CD4-positive, alpha-beta T cell (primary cell): ENCODE measurements at regions of chr12 and their contacts with region 1.

Region 1: GRCh38 chr12:104201238-104202001 is 14.2 kb upstream of the TXNRD1 start:
- DNase-seq: peak; percentile 16 to 82 (median 34)
- ATAC-seq: peak; percentile 82
- H3K4me3 ChIP-seq: no peak overlapping the region
- H3K4me3 Mint-ChIP-seq: no peak overlapping the region
- H3K27ac ChIP-seq: no peak overlapping the region
- H3K27ac Mint-ChIP-seq: no peak overlapping the region
- H3K4me1 ChIP-seq: no peaks in the 10 kb centered on the region
- H3K4me1 Mint-ChIP-seq: no peaks in the 10 kb centered on the region
- H3K27me3 ChIP-seq: peaks cover 0 to 5% of the 10 kb centered on the region in 2 experiments
- H3K27me3 Mint-ChIP-seq: peaks cover 5% of the 10 kb centered on the region
- CTCF ChIP-seq: peak; percentile 85

Region 2: DNA sequence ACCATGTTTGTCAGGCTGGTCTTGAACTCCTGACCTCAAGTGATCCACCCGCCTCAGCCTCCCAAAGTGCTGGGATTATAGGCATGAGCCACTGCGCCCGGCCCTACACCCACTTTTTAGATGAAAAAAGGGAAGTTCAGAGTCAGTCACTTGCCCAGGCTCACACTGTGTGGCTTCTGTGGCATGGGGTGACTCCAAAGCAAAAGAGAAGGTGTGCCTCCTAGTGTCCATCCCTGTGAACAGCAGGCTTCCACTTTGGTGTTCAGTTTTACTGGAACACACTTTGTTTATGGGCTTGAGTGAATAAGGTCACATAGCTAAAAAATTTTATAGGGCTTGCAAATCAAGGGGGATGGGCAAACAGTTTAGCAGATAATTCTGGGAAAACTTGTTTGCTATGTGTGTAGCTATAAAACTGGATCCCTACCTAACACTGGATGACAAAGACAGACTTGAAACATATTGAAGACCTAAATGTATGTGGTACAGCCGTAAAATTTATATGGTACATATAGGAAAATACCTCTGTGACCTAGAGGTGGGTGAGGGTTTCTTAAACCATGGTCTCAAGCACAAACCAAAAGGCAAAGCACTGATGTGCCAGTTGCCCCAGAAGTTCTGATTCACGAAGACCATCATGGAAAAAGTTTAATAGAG is 157.1 kb after region 1 on chr12:
- CTCF ChIA-PET with region 1: interaction called, 6 read pairs
- POLR2A ChIA-PET with region 1: no interaction called
- intact Hi-C with region 1: loop called (anchors 1 kb)
- DNase-seq: peak; percentile 47 to 83 (median 58)
- ATAC-seq: peak; percentile 96
- H3K4me3 ChIP-seq: no peak overlapping the region
- H3K4me3 Mint-ChIP-seq: no peak overlapping the region
- H3K27ac ChIP-seq: no peak overlapping the region
- H3K27ac Mint-ChIP-seq: no peak overlapping the region
- H3K4me1 ChIP-seq: no peaks in the 10 kb centered on the region
- H3K4me1 Mint-ChIP-seq: no peaks in the 10 kb centered on the region
- H3K27me3 ChIP-seq: no peaks in the 10 kb centered on the region
- H3K27me3 Mint-ChIP-seq: no peaks in the 10 kb centered on the region
- CTCF ChIP-seq: peak; percentile 77

Region 3: GRCh38 chr12:104877123-104877705 is 675.8 kb after region 1 on chr12:
- CTCF ChIA-PET with region 1: no interaction called
- POLR2A ChIA-PET with region 1: no interaction called
- intact Hi-C with region 1: loop called (anchors 2 kb)
- DNase-seq: peak; percentile 14 to 61 (median 27)
- ATAC-seq: peak; percentile 56
- H3K4me3 ChIP-seq: no peak overlapping the region
- H3K4me3 Mint-ChIP-seq: no peak overlapping the region
- H3K27ac ChIP-seq: no peak overlapping the region
- H3K27ac Mint-ChIP-seq: no peak overlapping the region
- H3K4me1 ChIP-seq: no peaks in the 10 kb centered on the region
- H3K4me1 Mint-ChIP-seq: no peaks in the 10 kb centered on the region
- H3K27me3 ChIP-seq: no peaks in the 10 kb centered on the region
- H3K27me3 Mint-ChIP-seq: no peaks in the 10 kb centered on the region
- CTCF ChIP-seq: peak; percentile 86

Region 4: DNA sequence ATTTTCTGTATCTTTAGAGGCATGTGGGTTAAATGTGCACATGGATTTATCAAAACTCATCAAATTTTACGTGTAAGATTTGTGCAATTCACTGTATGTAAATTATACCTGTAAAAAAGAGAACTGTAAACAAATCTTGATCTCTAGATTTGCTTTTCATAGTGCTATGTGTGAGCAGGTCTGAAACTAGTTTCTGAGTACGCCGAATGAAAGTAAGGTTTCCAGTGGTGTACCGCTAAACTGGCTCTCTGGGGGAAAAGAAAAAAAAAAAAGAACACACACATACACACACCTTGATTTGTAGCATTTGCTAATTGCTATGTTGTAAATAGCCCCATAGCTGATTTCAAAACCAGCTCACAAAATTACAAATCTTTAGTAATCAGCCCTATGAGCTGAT is 765.3 kb after region 1 on chr12:
- CTCF ChIA-PET with region 1: no interaction called
- POLR2A ChIA-PET with region 1: no interaction called
- intact Hi-C with region 1: loop called in 1 of 2 experiments (anchors 10 kb)
- DNase-seq: no peak
- ATAC-seq: no peak
- H3K4me3 ChIP-seq: no peak overlapping the region
- H3K4me3 Mint-ChIP-seq: no peak overlapping the region
- H3K27ac ChIP-seq: no peak overlapping the region
- H3K27ac Mint-ChIP-seq: no peak overlapping the region
- H3K4me1 ChIP-seq: no peaks in the 10 kb centered on the region
- H3K4me1 Mint-ChIP-seq: no peaks in the 10 kb centered on the region
- H3K27me3 ChIP-seq: no peaks in the 10 kb centered on the region
- H3K27me3 Mint-ChIP-seq: peaks cover 29% of the 10 kb centered on the region
- CTCF ChIP-seq: no peak

Region 5: GRCh38 chr12:106136263-106136662 is 1934.8 kb after region 1 on chr12:
- CTCF ChIA-PET with region 1: no interaction called
- POLR2A ChIA-PET with region 1: no interaction called
- intact Hi-C with region 1: loop called in 1 of 2 experiments (anchors 5 kb)
- DNase-seq: peak; percentile 44 to 78 (median 62)
- ATAC-seq: no peak
- H3K4me3 ChIP-seq: no peak overlapping the region
- H3K4me3 Mint-ChIP-seq: peak overlapping the region; percentile 46
- H3K27ac ChIP-seq: no peak overlapping the region
- H3K27ac Mint-ChIP-seq: no peak overlapping the region
- H3K4me1 ChIP-seq: peaks cover 21% of the 10 kb centered on the region
- H3K4me1 Mint-ChIP-seq: peaks cover 14% of the 10 kb centered on the region
- H3K27me3 ChIP-seq: peaks cover 39 to 62% of the 10 kb centered on the region in 2 experiments
- H3K27me3 Mint-ChIP-seq: peaks cover 84% of the 10 kb centered on the region
- CTCF ChIP-seq: peak; percentile 83